Dorsolateral prefrontal cortex (tissue), 120 donors: ENCODE measurements at regions of chr1 and their contacts with region 1.

Region 1: GRCh38 chr1:242017584-242018233 is 18.8 kb upstream of the MAP1LC3C start:
- DNase-seq: peak; percentile 46 to 79 (median 66)
- H3K4me3 ChIP-seq: no peak overlapping the region
- H3K27ac ChIP-seq: no peak overlapping the region
- H3K27me3 ChIP-seq: no peaks in the 10 kb centered on the region
- CTCF ChIP-seq: peak in 55 of 56 donors; percentile 48 to 84 (median 71)

Region 2: GRCh38 chr1:241895013-241895412 is 122.7 kb before region 1 on chr1:
- intact Hi-C with region 1: loop called in 1 of 2 experiments (anchors 5 kb)
- DNase-seq: no peak
- H3K4me3 ChIP-seq: no peak overlapping the region
- H3K27ac ChIP-seq: no peak overlapping the region
- H3K27me3 ChIP-seq: no peaks in the 10 kb centered on the region
- CTCF ChIP-seq: no peak

Region 3: DNA sequence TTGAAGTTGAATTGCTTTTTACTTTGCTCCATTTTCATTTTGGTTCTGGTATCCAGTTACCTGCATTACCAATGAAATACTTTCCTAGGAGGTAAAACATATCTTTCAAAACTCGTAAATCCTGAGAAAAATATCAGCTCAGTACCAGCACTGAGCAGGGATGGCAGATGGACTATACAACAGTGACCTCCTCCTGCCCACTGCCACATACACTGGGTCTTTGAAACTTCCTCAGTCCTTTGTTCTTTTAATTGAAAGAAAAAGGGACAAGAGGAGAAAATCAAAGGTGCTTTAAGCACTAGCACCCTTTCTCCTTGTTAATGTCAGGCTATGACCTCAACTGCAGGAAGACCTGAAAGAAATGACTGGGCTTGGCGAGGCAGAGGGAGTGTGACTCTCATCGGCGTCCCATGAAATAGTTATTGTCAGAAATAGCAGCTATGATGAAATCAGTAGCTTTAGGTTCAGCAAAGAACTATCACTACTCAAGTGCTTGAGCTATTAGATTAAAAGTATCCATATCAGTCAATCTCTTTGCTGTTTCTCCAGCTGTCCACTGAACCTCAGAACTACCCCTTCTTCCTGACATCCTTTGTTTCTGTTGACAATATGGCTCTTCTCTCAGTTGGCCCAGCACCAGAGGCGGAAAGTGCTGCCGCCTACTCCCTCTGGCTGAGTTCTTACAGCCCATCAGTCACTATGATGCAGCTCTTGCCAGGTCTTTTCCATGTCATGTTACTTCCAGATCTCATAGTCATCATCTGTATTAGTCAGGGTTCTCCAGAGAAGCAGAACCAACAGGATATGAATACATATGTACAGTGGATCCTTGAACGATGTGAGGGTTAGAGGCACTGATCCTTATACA is 188.1 kb after region 1 on chr1:
- intact Hi-C with region 1: loop called in 1 of 2 experiments (anchors 5 kb)
- DNase-seq: peak in 7 of 10 donors; percentile 33 to 60 (median 55)
- H3K4me3 ChIP-seq: peak overlapping the region in 34 of 59 donors; percentile 1 to 60 (median 26)
- H3K27ac ChIP-seq: peak overlapping the region in 57 of 59 donors; percentile 16 to 89 (median 74)
- H3K27me3 ChIP-seq: no peaks in the 10 kb centered on the region
- CTCF ChIP-seq: peak in 30 of 56 donors; percentile 1 to 58 (median 18)